CD4-positive, alpha-beta memory T cell (primary cell): ENCODE measurements at regions of chr19 and their contacts with region 1.

Region 1: GRCh38 chr19:20051841-20052768 is 12.8 kb upstream of the ZNF682 start:
- DNase-seq: peak; percentile 43 to 58 (median 48)
- H3K4me3 ChIP-seq: peak overlapping the region; percentile 53 to 95
- H3K4me3 Mint-ChIP-seq: peak overlapping the region; percentile 94 to 100 (median 99)
- H3K27ac ChIP-seq: peak overlapping the region; percentile 62
- H3K27ac Mint-ChIP-seq: peak overlapping the region; percentile 75 to 97 (median 94)
- H3K4me1 ChIP-seq: peaks cover 8% of the 10 kb centered on the region
- H3K4me1 Mint-ChIP-seq: peaks cover 3 to 22% (median 14%) of the 10 kb centered on the region in 4 donors
- H3K27me3 ChIP-seq: no peaks in the 10 kb centered on the region
- H3K27me3 Mint-ChIP-seq: no peaks in the 10 kb centered on the region

Region 2: GRCh38 chr19:20039203-20039723 is 12.8 kb before region 1 on chr19 and contains the start of gene ZNF682:
- CTCF ChIA-PET with region 1: interaction called, 6 read pairs
- POLR2A ChIA-PET with region 1: interaction called, 36 read pairs
- intact Hi-C with region 1: loop called (anchors 1 kb)
- DNase-seq: peak; percentile 93 to 97 (median 94)
- H3K4me3 ChIP-seq: peak within 1 kb of the TSS; percentile 79 to 96
- H3K4me3 Mint-ChIP-seq: peak within 1 kb of the TSS; percentile 95 to 98 (median 97)
- H3K27ac ChIP-seq: peak within 1 kb of the TSS; percentile 66
- H3K27ac Mint-ChIP-seq: peak within 1 kb of the TSS; percentile 95 to 98 (median 97)
- H3K4me1 ChIP-seq: peaks cover 13% of the 10 kb centered on the region
- H3K4me1 Mint-ChIP-seq: peaks cover 13 to 27% (median 18%) of the 10 kb centered on the region in 4 donors
- H3K27me3 ChIP-seq: no peaks in the 10 kb centered on the region
- H3K27me3 Mint-ChIP-seq: peaks cover 0 to 3% of the 10 kb centered on the region in 2 donors
- total RNA-seq, gene ZNF682: 7.3 TPM

Region 3: DNA sequence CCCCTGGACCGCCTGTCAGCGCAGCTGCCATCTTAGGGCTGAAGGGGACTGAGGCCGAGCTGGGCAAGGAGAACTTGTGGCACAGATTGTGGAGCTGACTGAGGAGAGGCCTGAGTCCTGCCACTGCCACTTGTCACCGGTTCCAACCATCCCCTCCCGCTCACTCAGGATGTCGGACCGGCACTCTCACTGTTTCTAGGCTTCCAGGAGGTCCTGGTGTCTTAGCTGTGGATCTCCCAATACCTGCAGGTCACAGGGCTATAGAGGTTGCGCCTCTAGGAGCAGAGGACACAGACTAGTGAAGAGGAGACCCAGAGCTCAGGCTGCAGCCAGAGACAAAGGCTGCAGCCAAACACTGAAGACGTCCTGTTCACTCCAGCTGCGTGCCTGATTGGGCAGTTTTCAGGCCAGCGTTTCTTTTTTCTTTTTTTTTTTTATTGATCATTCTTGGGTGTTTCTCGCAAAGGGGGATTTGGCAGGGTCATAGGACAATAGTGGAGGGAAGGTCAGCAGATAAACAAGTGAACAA is 99.6 kb after region 1 on chr19:
- CTCF ChIA-PET with region 1: no interaction called
- POLR2A ChIA-PET with region 1: no interaction called
- intact Hi-C with region 1: no loop called
- DNase-seq: no peak
- H3K4me3 ChIP-seq: no peak overlapping the region
- H3K4me3 Mint-ChIP-seq: no peak overlapping the region
- H3K27ac ChIP-seq: no peak overlapping the region
- H3K27ac Mint-ChIP-seq: no peak overlapping the region
- H3K4me1 ChIP-seq: no peaks in the 10 kb centered on the region
- H3K4me1 Mint-ChIP-seq: no peaks in the 10 kb centered on the region
- H3K27me3 ChIP-seq: no peaks in the 10 kb centered on the region
- H3K27me3 Mint-ChIP-seq: no peaks in the 10 kb centered on the region

Region 4: DNA sequence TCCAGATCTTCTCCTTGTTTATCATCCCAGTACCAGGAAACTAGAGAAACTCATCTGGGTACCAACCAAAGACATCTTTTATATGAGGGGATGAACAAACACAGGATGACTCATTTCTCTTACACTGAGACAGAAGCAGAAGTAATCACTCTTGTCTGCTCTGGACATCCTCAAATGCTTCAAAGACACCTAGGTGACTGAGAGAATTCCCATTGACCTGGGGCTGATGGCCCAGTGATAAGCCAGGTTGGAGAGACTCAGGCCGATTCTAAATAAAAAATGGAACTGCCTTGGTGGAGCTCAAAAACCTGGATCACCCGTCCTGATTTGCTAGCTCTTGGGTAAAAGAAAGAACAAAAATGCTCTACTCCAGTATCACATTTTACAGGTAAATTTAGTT is 297.1 kb after region 1 on chr19:
- CTCF ChIA-PET with region 1: no interaction called
- POLR2A ChIA-PET with region 1: no interaction called
- intact Hi-C with region 1: no loop called
- DNase-seq: no peak
- H3K4me3 ChIP-seq: no peak overlapping the region
- H3K4me3 Mint-ChIP-seq: no peak overlapping the region
- H3K27ac ChIP-seq: no peak overlapping the region
- H3K27ac Mint-ChIP-seq: no peak overlapping the region
- H3K4me1 ChIP-seq: no peaks in the 10 kb centered on the region
- H3K4me1 Mint-ChIP-seq: no peaks in the 10 kb centered on the region
- H3K27me3 ChIP-seq: no peaks in the 10 kb centered on the region
- H3K27me3 Mint-ChIP-seq: no peaks in the 10 kb centered on the region